ENCODE measurements at regions of chr14 and their contacts with region 1.

Region 1: DNA sequence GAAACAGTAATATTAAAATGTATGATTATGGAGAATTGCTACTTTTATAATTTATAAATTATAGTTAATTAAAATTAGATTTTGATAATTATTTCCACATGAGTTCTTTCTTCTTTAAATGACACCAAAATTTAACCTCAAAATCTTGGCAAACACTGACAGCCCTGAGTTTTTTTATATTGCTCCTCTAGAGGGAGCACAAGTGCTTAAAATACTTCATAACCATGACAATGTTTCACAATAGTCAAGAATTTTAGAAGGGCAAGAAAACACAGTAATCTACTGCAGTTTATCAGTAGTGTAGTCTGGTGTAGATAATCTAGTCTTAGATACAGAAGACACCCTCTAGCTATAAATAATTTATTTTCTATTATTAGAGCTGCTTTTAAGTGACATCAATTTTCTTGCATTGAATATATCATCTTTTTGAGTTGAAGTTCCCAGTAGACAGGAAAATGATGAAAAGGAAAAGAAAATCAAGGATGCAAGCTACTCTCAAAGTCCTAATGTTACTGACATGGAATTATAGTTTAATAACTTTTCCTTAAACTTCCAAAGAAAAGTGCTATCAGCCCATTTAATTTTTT is 14.3 kb upstream of the PTGER2 start:
- DNase-seq: peak; percentile 40 to 72 (median 61)
- H3K4me3 ChIP-seq: no peak overlapping the region
- H3K4me3 Mint-ChIP-seq: no peak overlapping the region
- H3K27ac ChIP-seq: no peak overlapping the region
- H3K27ac Mint-ChIP-seq: no peak overlapping the region
- H3K4me1 ChIP-seq: peaks cover 6 to 19% of the 10 kb centered on the region in 2 donors
- H3K4me1 Mint-ChIP-seq: peaks cover 27% of the 10 kb centered on the region
- H3K27me3 ChIP-seq: no peaks in the 10 kb centered on the region
- H3K27me3 Mint-ChIP-seq: peaks cover 2 to 3% (median 3%) of the 10 kb centered on the region in 3 donors
- CTCF ChIP-seq: peak; percentile 82

Region 2: DNA sequence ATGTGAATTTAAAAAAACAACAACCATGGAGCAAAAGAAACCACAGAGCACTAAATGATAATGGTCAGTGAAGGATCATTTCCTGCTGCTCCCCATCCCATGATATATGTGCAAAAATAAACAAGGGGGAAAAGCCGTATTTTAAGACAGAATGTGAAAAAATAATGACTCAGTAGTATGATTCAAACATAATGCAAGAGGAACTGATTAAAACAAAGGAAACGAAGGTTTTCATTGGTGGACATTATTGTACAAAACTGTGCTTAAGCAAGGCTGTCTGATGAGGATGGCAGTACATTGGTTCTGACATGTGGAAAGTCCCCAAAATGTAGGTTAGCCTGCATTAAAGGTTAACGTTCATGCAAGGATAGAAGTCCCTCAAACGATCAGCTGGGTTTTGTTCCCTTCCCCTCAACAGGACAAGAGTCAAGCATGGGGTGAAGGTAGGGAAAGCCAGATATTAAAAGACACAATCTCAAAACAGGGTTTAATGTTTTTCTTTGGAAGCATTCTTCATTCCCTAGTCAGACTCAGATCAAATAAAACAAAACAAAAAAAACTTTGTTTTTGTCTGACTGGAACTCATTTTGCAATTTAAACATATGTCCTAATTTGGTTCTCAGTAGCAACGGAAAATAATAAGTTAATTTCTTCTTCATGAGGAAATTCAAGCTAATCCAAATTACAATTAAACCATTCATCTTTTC is 58.5 kb before region 1 on chr14:
- intact Hi-C with region 1: no loop called
- DNase-seq: peak in 2 of 3 donors; percentile 5 to 51
- H3K4me3 ChIP-seq: no peak overlapping the region
- H3K4me3 Mint-ChIP-seq: no peak overlapping the region
- H3K27ac ChIP-seq: no peak overlapping the region
- H3K27ac Mint-ChIP-seq: no peak overlapping the region
- H3K4me1 ChIP-seq: no peaks in the 10 kb centered on the region
- H3K4me1 Mint-ChIP-seq: peaks cover 3% of the 10 kb centered on the region
- H3K27me3 ChIP-seq: no peaks in the 10 kb centered on the region
- H3K27me3 Mint-ChIP-seq: peaks cover 0 to 10% (median 2%) of the 10 kb centered on the region in 3 donors
- CTCF ChIP-seq: no peak

Region 3: DNA sequence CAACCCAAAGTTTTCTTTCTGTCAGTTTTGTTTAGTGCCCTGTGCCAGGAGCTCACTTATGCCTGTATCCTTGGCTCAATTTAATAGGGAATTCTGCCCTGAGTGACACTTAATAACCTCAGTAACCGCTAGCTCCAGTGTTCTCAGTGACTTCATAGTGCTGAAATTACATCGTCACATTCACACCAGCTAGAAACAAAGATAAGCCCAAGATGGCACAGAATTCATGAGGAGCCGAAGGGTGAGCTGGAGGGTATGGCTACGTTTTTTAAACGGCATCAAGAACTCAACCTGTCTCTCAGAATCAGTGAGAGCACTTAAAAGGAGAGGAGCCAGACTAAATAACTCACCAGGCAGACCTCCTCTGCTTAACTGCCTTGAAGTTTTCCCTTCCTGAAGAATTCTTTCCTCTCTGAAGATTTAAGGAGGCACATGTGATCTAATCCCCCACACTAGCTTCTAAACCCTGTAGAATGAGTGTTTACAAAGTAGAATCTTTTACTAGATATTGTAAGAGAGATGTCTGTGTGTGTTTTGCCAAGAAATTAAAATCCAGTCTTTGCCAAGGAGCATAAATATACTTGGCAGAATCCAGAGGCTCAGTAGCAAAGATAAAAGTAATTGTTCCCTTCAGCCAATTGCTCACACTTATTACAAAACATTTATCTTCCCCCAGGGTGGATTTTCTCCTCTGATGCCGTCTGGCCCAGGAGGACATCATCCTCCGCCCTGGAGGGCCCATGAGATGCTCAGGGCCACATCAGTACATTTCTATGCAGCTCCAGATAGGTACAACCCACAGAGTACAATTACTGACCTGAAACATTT is 51.7 kb after region 1 on chr14:
- intact Hi-C with region 1: loop called in 1 of 2 experiments (anchors 10 kb)
- DNase-seq: no peak
- H3K4me3 ChIP-seq: no peak overlapping the region
- H3K4me3 Mint-ChIP-seq: peak overlapping the region in 1 of 2 donors; percentile 61
- H3K27ac ChIP-seq: no peak overlapping the region
- H3K27ac Mint-ChIP-seq: no peak overlapping the region
- H3K4me1 ChIP-seq: peaks cover 8 to 12% of the 10 kb centered on the region in 2 donors
- H3K4me1 Mint-ChIP-seq: peaks cover 14% of the 10 kb centered on the region
- H3K27me3 ChIP-seq: peaks cover 92 to 99% of the 10 kb centered on the region in 2 donors
- H3K27me3 Mint-ChIP-seq: peaks cover 83 to 92% (median 90%) of the 10 kb centered on the region in 3 donors
- CTCF ChIP-seq: no peak

Region 4: GRCh38 chr14:52467515-52468266 is 167.9 kb after region 1 on chr14:
- intact Hi-C with region 1: loop called (anchors 5 to 10 kb)
- DNase-seq: no peak
- H3K4me3 ChIP-seq: no peak overlapping the region
- H3K4me3 Mint-ChIP-seq: no peak overlapping the region
- H3K27ac ChIP-seq: no peak overlapping the region
- H3K27ac Mint-ChIP-seq: no peak overlapping the region
- H3K4me1 ChIP-seq: no peaks in the 10 kb centered on the region
- H3K4me1 Mint-ChIP-seq: no peaks in the 10 kb centered on the region
- H3K27me3 ChIP-seq: no peaks in the 10 kb centered on the region
- H3K27me3 Mint-ChIP-seq: peaks cover 2% of the 10 kb centered on the region in 3 donors
- CTCF ChIP-seq: no peak

Region 5: DNA sequence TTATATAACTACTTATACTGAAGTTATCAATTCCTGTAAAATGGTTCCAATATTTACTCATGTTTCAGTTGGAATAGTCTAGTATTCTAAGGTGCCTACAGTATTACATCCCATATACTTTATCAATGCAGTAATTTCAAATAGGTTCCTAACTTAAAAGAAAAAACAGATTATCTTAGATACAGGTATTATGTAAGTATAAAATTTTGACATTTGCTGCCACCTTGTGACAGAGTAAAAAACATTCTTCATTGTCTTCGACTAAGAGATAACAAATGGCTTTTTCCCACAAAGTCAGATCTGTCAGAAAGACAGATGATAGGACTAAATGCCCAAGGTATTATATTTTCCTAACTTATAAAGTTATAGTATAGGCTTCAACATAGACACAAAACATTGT is 173.8 kb after region 1 on chr14:
- intact Hi-C with region 1: loop called (anchors 5 to 10 kb)
- DNase-seq: peak; percentile 15 to 52 (median 36)
- H3K4me3 ChIP-seq: no peak overlapping the region
- H3K4me3 Mint-ChIP-seq: no peak overlapping the region
- H3K27ac ChIP-seq: no peak overlapping the region
- H3K27ac Mint-ChIP-seq: no peak overlapping the region
- H3K4me1 ChIP-seq: no peaks in the 10 kb centered on the region
- H3K4me1 Mint-ChIP-seq: peaks cover 2% of the 10 kb centered on the region
- H3K27me3 ChIP-seq: no peaks in the 10 kb centered on the region
- H3K27me3 Mint-ChIP-seq: peaks cover 0 to 4% (median 2%) of the 10 kb centered on the region in 3 donors
- CTCF ChIP-seq: peak; percentile 62

Measured in CD14-positive monocyte (primary cell).